Dorsolateral prefrontal cortex (tissue), 120 donors: ENCODE measurements at regions of chr6 and their contacts with region 1.

Region 1: DNA sequence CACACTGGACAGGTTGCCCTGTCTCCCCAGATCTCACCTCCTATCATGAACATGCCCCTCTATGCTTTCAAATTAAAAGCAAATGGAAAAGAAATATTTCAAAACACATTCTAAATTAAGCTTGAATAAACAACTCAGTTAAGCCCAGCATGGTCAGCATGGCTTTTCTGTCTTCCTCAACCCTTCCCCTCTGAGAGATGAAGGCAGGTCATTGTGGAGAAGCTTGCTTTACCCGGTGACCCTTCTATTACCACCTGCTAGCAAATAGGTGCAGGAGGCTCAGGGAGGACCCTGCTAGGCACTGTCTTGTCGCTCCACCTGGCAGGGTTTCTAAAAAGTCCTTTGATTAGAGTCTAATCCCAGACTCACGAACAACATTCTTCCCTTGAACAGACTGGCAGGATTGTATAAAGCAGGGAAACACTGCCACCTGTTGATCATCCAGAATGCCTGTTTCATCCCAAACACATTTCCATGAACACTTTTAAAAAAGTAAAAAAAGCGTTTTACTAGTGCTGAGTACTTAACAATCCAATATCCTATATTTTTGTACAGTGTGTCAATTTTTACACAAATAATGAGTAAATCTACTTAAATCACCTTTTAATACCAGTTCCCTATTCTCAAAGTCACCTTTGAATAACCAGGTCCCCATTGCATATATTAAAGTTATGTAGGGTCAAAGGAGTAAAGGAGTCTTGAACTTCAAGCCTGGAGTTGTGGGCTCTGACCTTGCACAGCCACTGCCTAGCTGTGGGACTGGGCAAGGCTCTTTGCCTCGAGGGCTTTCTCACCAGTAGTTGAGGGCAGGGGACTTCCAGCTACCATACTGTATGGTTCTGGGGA is 75.5 kb downstream of the GPR6 start:
- DNase-seq: no peak
- H3K4me3 ChIP-seq: peak overlapping the region in 1 of 59 donors; percentile 21
- H3K27ac ChIP-seq: no peak overlapping the region
- H3K27me3 ChIP-seq: peaks cover 0 to 2% (median 0%) of the 10 kb centered on the region in 45 donors
- CTCF ChIP-seq: peak; percentile 43 to 90 (median 74)

Region 2: DNA sequence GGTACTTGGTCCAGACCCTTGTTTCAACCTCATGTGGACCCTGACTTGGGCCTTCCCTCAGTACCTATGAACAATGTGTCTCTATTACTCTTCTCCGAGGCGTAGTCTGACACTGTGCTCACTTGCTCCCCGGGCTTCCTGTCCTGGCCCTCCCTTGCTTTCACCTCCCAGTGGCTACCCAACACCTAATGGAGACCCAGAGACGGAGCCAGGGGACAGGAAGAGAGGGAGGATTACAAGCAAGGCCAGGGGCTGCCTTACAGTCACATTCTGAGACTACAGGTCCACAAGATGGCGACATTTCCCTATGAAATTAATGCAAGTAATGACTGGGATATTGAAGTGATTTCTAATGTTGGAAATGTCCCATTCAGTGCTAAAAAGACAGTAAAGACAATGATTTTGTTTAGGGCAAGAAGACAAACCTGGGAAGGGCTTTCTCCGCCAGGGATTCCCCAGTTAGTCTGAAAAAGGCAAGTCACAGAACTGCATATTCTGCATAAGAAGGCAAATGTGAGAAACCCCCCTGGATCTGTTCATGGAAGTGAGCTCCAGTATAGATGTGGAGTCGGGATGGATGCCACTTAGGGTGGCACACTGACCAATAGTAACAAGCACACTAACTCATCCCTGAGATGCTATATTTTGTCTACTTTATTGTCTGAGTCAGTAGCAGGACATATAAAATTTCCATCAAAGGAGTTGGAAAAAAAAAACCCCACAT is 526.6 kb before region 1 on chr6:
- intact Hi-C with region 1: loop called in 1 of 2 experiments (anchors 2 kb)
- DNase-seq: peak in 4 of 10 donors; percentile 12 to 40 (median 18)
- H3K4me3 ChIP-seq: no peak overlapping the region
- H3K27ac ChIP-seq: no peak overlapping the region
- H3K27me3 ChIP-seq: no peaks in the 10 kb centered on the region
- CTCF ChIP-seq: peak in 54 of 56 donors; percentile 29 to 75 (median 60)